Right ventricle myocardium superior (tissue), 1 donor: ENCODE measurements at regions of chr1 and their contacts with region 1.

Region 1: GRCh38 chr1:35369922-35370671 is 101.6 kb downstream of the ZMYM4 start:
- DNase-seq: peak; percentile 68
- ATAC-seq: peak; percentile 90

Region 2: DNA sequence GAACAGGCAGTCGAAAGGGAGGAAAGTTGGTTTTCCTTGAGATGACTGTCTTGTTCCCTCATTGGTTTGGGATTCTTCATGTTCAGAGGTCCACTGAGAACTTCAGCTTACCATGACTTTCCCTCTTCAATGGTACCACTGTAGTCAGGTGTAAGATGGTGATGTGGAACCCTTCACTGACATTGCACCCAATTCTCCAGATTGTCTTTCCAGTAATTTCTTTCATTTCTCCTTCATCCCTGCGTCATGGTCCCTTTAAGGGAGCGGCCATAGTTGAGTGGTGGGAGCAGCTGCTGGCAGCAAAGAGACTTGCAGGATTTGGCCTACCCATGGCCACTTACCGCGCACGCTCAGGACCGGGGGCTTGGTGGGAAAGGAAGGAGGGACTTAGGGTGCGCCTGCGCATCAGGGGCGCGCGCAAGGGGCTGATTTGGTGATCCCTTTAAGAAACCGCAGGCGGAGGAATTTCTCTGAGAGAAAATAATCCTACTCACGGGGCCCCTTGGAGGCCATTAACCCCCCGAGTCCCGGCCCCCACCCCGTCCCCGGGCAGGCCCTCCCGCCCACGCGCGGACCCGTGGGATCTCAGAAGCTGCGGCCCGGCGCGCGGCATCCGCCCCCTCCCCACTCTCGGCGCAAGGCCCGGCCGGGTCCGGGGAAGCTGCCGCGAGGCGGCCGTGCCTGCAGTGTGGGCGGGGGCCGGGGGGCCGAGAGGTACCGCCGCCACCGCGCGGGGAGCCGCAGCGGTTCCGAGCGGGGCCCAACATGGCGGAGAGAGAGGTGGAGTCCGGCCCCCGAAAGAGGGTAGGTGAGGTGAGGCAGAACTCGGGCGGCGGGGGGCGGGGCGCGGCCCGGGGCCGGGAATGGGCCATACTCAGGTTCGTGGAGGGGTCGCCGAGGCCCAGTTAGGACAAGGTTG is 101.6 kb before region 1 on chr1 and contains the start of gene ZMYM4:
- intact Hi-C with region 1: loop called (anchors 10 kb)
- DNase-seq: peak; percentile 96
- ATAC-seq: peak; percentile 98
- total RNA-seq, gene ZMYM4: 31.2 TPM

Region 3: GRCh38 chr1:35406103-35406502 is 36.0 kb after region 1 on chr1:
- intact Hi-C with region 1: no loop called
- DNase-seq: no peak
- ATAC-seq: no peak